Endothelial cell of umbilical vein (primary cell): ENCODE measurements at regions of chr12 and their contacts with region 1.

Region 1: GRCh38 chr12:65156366-65156841 is 13.0 kb upstream of the LEMD3 start:
- DNase-seq: peak; percentile 45
- H3K4me3 ChIP-seq: no peak overlapping the region
- H3K27ac ChIP-seq: no peak overlapping the region
- H3K4me1 ChIP-seq: peaks cover 7% of the 10 kb centered on the region
- H3K27me3 ChIP-seq: peaks cover 0 to 2% of the 10 kb centered on the region in 2 experiments
- CTCF ChIP-seq: no peak
- POLR2A ChIP-seq: no peak

Region 2: GRCh38 chr12:65039306-65039705 is 117.1 kb before region 1 on chr12:
- CTCF ChIA-PET with region 1: no interaction called
- POLR2A ChIA-PET with region 1: no interaction called
- dilution Hi-C with region 1: no loop called
- intact Hi-C with region 1: no loop called
- DNase-seq: no peak
- H3K4me3 ChIP-seq: no peak overlapping the region
- H3K27ac ChIP-seq: no peak overlapping the region
- H3K4me1 ChIP-seq: no peaks in the 10 kb centered on the region
- H3K27me3 ChIP-seq: peaks cover 5 to 6% of the 10 kb centered on the region in 2 experiments
- CTCF ChIP-seq: no peak
- POLR2A ChIP-seq: no peak

Region 3: GRCh38 chr12:65139389-65139788 is 17.0 kb before region 1 on chr12:
- CTCF ChIA-PET with region 1: interaction called, 3 read pairs
- POLR2A ChIA-PET with region 1: no interaction called
- dilution Hi-C with region 1: no loop called
- intact Hi-C with region 1: loop called (anchors 2 kb)
- DNase-seq: no peak
- H3K4me3 ChIP-seq: no peak overlapping the region
- H3K27ac ChIP-seq: no peak overlapping the region
- H3K4me1 ChIP-seq: no peaks in the 10 kb centered on the region
- H3K27me3 ChIP-seq: peaks cover 18 to 19% of the 10 kb centered on the region in 2 experiments
- CTCF ChIP-seq: no peak
- POLR2A ChIP-seq: no peak

Region 4: DNA sequence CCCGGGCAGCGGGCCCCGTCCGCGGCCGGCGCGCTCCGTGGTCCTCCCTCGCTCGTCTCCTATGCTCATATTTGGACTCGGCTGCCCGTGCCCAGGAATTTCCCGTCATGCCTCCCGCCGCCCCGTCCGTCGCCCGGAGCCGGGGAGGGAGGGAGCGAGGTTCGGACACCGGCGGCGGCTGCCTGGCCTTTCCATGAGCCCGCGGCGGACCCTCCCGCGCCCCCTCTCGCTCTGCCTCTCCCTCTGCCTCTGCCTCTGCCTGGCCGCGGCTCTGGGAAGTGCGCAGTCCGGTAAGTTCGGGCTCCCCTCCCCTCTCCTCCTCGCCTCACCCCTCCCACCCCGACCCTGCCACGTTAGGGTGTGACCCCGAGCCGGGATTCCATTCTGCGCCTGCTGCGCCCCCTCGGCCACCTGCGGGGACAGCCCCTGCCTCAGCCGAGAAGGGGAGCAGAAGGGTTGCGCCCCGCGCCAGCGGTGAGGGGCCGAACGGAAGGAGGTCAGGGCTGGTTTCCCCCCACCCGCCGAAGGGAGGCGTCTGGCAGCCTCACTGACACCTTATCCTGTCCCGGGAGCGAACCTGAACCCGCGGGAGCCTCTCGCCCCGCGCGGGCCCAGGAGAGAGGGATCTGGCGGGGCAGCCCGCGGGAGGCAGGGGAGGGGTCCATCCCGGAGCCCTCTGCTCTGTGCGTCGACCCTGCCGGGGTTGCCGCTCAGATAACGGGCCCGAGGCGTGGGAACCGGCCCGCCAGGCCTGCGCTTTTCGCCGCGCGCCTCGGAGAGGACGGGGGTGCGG is 122.4 kb after region 1 on chr12 and contains the start of gene MSRB3:
- CTCF ChIA-PET with region 1: no interaction called
- POLR2A ChIA-PET with region 1: no interaction called
- dilution Hi-C with region 1: no loop called
- intact Hi-C with region 1: no loop called
- DNase-seq: peak; percentile 66
- H3K4me3 ChIP-seq: peak within 1 kb of the TSS; percentile 63 to 95 (median 90)
- H3K27ac ChIP-seq: peak within 1 kb of the TSS; percentile 94
- H3K4me1 ChIP-seq: peaks cover 24% of the 10 kb centered on the region
- H3K27me3 ChIP-seq: no peaks in the 10 kb centered on the region
- CTCF ChIP-seq: no peak
- POLR2A ChIP-seq: no peak
- total RNA-seq, gene MSRB3: 59.3 and 63.7 TPM in 2 replicates